HEK293 (cell line): ENCODE measurements at regions of chr2 and their contacts with region 1.

Region 1: GRCh38 chr2:68751397-68752339 is 17.1 kb downstream of the ARHGAP25 start:
- H3K4me3 ChIP-seq: no peak overlapping the region
- H3K27ac ChIP-seq: no peak overlapping the region
- H3K4me1 ChIP-seq: no peaks in the 10 kb centered on the region
- CTCF ChIP-seq: peak; percentile 72

Region 2: DNA sequence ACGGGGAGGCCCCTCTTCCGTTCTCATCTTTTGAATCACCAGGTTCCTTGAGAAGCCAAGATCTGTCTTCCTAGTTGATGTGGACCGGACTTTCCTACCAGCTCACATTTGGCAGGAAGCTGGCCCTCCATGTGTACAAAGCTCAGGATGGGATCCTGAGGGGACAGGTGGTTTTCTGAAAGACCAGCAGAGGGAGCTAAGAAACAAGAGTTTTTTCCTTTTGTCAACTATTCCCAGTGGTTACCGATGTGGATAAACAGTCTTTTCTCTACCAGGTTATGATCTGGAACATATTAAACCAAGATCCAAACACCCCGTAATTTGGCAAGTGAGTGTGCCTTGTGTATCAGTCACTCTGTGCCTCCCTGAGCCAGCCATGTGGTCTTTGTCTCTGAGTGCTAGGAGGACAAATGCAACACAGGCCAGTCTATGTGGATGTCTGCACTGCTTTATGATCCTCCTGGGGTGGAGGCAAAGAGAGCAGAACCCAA is 42.2 kb before region 1 on chr2:
- CTCF ChIA-PET with region 1: interaction called, 17 read pairs
- POLR2A ChIA-PET with region 1: no interaction called
- H3K4me3 ChIP-seq: no peak overlapping the region
- H3K27ac ChIP-seq: no peak overlapping the region
- H3K4me1 ChIP-seq: no peaks in the 10 kb centered on the region; the same call in 1 of the 2 replicates
- CTCF ChIP-seq: 0 out of 2 replicates have a peak, but pooled peaks have one; percentile 45

Region 3: GRCh38 chr2:68762665-68763064 is 11.0 kb after region 1 on chr2:
- CTCF ChIA-PET with region 1: interaction called, 31 read pairs
- POLR2A ChIA-PET with region 1: no interaction called
- H3K4me3 ChIP-seq: no peak overlapping the region
- H3K27ac ChIP-seq: no peak overlapping the region
- H3K4me1 ChIP-seq: no peaks in the 10 kb centered on the region
- CTCF ChIP-seq: no peak

Region 4: DNA sequence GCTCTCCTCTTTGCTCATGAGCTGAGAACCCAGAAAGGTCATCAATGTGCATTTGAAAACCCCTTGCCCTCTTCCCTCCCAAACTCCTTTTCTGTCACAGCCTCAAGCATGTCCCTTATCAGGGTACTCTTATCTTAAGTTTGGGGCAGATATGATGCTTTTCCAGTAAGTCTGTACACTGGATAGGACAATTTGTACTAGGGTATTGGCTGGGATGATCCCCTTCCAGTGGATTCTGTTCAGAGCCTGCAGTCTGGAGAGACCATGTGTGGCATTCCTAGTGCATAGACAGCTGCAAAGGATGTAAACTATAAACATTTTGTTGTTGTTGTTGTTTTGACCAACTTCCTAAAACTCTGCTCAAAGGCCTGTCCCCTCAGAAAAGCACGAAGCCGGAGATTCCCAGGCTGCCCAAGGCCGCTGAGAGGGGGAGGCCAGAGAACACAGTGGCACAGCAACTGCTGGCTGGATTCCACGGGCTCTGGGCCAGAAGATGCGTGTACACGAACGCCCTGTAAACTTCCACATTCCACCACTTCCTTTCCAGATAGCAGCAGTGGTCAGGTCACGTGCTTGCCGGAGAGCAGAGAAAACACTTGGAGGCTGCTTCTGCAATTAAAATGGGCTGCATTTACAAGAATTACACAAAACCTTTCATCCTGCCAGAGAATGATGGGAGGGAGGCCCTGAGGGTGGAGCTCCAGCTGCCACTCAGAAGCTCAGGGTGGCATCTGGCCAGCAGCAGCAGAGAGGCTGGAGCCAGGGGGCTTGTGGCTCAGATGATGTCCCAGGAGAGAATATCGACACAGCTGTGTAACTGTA is 77.4 kb after region 1 on chr2:
- CTCF ChIA-PET with region 1: interaction called, 130 read pairs
- POLR2A ChIA-PET with region 1: no interaction called
- H3K4me3 ChIP-seq: no peak overlapping the region
- H3K27ac ChIP-seq: no peak overlapping the region; the same call in 1 of the 2 replicates
- H3K4me1 ChIP-seq: peaks cover 8% of the 10 kb centered on the region
- CTCF ChIP-seq: no peak; the same call in 1 of the 2 replicates

Region 5: GRCh38 chr2:68885074-68885810 is 133.6 kb after region 1 on chr2:
- CTCF ChIA-PET with region 1: interaction called, 11 read pairs
- POLR2A ChIA-PET with region 1: no interaction called
- H3K4me3 ChIP-seq: no peak overlapping the region
- H3K27ac ChIP-seq: no peak overlapping the region
- H3K4me1 ChIP-seq: no peaks in the 10 kb centered on the region
- CTCF ChIP-seq: no peak

Region 6: DNA sequence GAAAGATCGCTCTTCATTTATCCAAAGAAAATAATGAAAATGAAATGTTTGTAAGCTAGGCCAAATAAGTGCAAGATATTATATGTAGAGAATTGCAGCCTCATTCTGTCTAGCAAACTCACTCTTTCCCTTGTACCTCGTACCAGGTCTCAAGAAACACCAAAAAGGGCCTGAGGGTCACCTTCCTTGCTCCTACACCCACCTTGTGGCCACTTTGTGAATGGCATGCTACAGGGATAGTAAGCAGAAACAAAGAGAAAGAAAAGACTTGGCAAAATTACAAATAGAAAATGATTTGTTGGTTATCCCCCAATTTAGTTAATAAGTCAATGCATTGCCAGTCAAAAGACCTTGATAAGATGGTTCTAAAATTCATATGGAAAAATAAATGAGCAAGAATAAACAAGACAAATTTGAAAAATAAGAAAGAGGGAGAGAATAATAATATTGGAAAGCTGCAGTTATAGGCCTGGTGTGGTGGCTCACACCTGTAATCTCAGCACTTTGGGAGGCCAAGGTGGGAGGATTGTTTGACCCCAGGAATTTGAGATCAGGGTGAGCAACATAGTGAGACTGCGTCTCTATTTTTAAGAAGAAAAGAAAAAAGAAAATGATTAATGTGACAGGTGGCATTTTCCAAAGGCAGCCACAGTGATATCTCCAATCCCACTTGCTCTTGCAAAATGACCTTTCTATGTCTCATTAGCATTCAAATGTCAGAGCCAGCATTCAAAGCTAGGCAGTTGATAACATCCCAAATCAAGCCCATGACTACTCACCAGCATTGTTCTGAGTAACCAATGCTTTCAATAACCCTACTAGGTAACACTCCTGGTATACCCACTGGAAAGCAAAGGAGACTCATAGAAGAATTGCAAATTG is 158.4 kb after region 1 on chr2:
- CTCF ChIA-PET with region 1: interaction called, 34 read pairs
- POLR2A ChIA-PET with region 1: no interaction called
- H3K4me3 ChIP-seq: no peak overlapping the region
- H3K27ac ChIP-seq: no peak overlapping the region
- H3K4me1 ChIP-seq: 0 out of 2 replicates have a peak, but pooled peaks cover 2% of the 10 kb centered on the region
- CTCF ChIP-seq: peak; percentile 24; the same call in 1 of the 2 replicates

Region 7: DNA sequence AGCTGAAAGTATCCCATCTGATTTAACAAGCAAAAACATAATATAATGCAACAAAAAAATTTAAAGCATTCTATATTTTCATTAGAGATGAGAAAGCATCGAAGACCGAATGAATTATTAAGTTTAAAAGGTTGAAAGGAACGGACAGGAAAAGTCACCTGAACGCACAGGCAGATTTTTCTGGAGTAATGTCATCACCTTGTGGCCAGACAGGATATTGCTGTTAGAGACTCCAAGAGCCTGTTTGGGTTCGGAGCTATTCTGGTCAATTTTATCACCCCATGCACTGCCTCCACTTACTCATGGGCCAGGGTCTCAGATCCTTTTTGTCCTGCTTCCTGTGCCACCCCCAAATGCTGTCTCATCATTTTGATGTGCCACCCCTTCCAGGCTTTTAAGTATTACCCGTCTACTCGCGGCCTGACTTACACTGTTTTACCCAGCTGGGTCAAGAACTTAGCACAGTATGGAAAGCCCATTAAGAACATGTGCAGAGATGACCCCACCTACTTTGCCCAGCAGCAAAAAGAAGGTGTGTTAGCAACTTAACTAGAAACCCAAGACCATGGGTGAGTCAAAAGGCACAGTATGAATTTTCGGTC is 173.7 kb after region 1 on chr2:
- CTCF ChIA-PET with region 1: interaction called, 60 read pairs
- POLR2A ChIA-PET with region 1: no interaction called
- H3K4me3 ChIP-seq: no peak overlapping the region
- H3K27ac ChIP-seq: no peak overlapping the region
- H3K4me1 ChIP-seq: no peaks in the 10 kb centered on the region
- CTCF ChIP-seq: peak; percentile 46; the same call in 1 of the 2 replicates